Motor neuron (in vitro differentiated cells): ENCODE measurements at regions of chr22 and their contacts with region 1.

Region 1: DNA sequence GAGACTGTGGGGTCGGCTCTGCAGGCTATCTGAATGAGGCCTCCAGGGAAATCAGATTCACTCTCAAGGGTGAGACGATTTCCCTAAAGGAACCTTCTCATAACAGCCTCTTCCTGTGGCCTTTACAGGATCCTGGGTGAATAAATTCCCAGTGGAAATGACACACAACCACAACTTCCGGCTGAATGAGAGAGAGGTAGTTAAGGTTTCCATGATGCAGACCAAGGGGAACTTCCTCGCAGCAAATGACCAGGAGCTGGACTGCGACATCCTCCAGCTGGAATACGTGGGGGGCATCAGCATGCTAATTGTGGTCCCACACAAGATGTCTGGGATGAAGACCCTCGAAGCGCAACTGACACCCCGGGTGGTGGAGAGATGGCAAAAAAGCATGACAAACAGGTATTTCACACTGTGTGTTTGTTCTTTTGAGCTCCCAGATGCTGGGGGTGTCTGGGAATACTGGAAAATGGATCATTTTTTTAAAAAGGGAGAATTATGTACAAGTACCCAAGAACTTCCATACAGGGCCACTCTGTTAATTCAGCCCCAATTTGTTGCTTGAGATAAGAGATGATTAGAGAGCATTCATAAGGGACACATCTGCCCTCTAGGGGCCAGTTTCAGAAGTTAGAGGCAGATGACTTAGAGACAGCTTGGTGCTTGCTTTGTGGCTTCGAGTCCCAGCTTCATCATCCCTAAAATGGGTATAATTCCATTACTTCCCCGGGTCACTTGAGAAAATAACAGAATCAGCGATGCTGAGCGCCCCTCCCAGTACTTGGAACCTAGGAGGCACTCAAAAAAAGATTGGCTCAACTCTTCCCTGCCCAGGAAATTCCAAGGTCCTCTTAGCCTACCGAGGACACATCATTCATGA is 10.2 kb downstream of the SERPIND1 start:
- ATAC-seq: peak in 5 of 8 experiments; percentile 47 to 93 (median 75)
- H3K4me3 ChIP-seq: no peak overlapping the region
- H3K27ac ChIP-seq: peak overlapping the region in 1 of 2 donors; percentile 24
- H3K4me1 ChIP-seq: no peaks in the 10 kb centered on the region

Region 2: GRCh38 chr22:20885557-20886323 is 101.7 kb after region 1 on chr22:
- in situ Hi-C with region 1: loop called in 1 of 9 experiments (anchors 25 kb)
- ATAC-seq: peak; percentile 91 to 99 (median 98)
- H3K4me3 ChIP-seq: no peak overlapping the region
- H3K27ac ChIP-seq: peak overlapping the region; percentile 33 to 48
- H3K4me1 ChIP-seq: peaks cover 0 to 2% of the 10 kb centered on the region in 2 donors